Ascending aorta (tissue), 2 donors: ENCODE measurements at regions of chr7 and their contacts with region 1.

Region 1: DNA sequence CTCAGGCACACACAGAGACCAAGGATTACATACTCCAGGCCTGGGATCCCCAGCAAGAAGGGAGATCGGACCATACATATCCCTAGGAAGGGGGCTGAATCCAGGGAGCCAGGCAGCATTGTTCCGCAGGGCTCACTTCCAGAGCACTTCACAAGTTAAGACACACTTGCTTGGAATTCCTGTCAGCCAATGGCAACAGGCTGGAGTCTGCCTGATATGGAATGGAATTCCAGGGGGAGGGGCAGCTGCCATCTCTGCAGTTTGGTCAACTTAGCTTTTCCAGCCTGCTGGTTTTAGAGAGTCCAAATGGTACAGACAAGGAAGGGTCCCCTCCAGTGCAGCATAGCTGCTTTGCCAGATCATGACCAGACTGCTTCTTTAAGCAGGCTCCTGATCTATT is 290.0 kb upstream of the GLI3 start:
- DNase-seq: no peak
- H3K4me3 ChIP-seq: no peak overlapping the region
- H3K27ac ChIP-seq: no peak overlapping the region
- H3K4me1 ChIP-seq: no peaks in the 10 kb centered on the region
- H3K27me3 ChIP-seq: no peaks in the 10 kb centered on the region
- CTCF ChIP-seq: no peak

Region 2: DNA sequence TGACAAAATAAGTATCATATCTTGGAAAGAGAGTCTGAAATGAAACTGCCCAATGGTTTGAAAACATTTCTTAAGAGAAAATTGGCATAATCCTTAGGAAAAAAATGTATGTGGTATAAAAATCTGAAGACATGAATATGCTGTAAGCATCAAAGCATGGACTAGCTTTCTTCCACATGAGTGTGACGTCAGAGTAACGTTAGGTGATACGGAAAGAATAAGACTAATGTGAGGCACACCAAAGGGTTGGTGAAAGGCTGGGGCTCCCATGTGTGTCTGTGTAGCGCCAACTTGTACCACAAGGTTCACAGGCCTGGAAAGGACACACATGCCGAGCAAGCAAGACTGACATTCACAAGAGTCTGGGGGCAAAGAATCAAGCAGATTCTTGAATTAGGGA is 51.9 kb before region 1 on chr7:
- intact Hi-C with region 1: loop called (anchors 2 kb)
- DNase-seq: no peak
- H3K4me3 ChIP-seq: no peak overlapping the region
- H3K27ac ChIP-seq: no peak overlapping the region
- H3K4me1 ChIP-seq: no peaks in the 10 kb centered on the region
- H3K27me3 ChIP-seq: no peaks in the 10 kb centered on the region
- CTCF ChIP-seq: no peak